ENCODE measurements at regions of chr5 and their contacts with region 1.

Region 1: GRCh38 chr5:169302491-169303118 is 1.7 kb upstream of the SLIT3 start:
- DNase-seq: peak; percentile 70 to 88 (median 84)
- ATAC-seq: peak in 1 of 2 donors; percentile 49
- H3K4me3 ChIP-seq: no peak overlapping the region
- H3K27ac ChIP-seq: no peak overlapping the region
- H3K4me1 ChIP-seq: peaks cover 8% of the 10 kb centered on the region
- H3K27me3 ChIP-seq: no peaks in the 10 kb centered on the region

Region 2: DNA sequence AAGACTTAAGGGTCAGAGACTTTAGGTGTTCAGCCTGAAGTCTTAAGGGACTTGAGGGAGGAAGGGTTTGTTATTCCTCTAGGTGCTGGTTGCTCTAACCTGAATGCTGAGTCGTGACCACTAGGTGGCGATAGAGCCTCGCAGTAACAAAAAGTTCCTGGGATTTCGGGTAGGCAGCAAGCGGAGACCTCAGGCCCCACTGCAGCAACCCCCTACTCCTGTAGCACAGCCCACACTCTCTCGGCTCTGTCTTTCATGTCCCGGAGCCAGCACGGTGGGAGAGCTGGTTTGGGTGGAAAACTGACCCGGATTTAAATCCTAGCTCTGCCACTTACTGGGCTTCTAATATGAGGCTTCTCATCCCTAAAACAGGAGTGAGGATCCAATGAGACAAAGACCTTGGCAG is 623.1 kb before region 1 on chr5:
- intact Hi-C with region 1: loop called in 1 of 4 experiments (anchors 5 kb)
- DNase-seq: peak; percentile 77 to 86 (median 80)
- ATAC-seq: peak; percentile 39 to 55
- H3K4me3 ChIP-seq: no peak overlapping the region
- H3K27ac ChIP-seq: no peak overlapping the region
- H3K4me1 ChIP-seq: peaks cover 12% of the 10 kb centered on the region
- H3K27me3 ChIP-seq: no peaks in the 10 kb centered on the region

Region 3: GRCh38 chr5:168786147-168786546 is 516.5 kb before region 1 on chr5:
- intact Hi-C with region 1: no loop called
- DNase-seq: no peak
- ATAC-seq: no peak
- H3K4me3 ChIP-seq: no peak overlapping the region
- H3K27ac ChIP-seq: no peak overlapping the region
- H3K4me1 ChIP-seq: no peaks in the 10 kb centered on the region
- H3K27me3 ChIP-seq: no peaks in the 10 kb centered on the region

Region 4: GRCh38 chr5:168987543-168988300 is 314.9 kb before region 1 on chr5:
- intact Hi-C with region 1: loop called (anchors 2 to 5 kb)
- DNase-seq: peak; percentile 70 to 90 (median 78)
- ATAC-seq: peak; percentile 29 to 53
- H3K4me3 ChIP-seq: no peak overlapping the region
- H3K27ac ChIP-seq: no peak overlapping the region
- H3K4me1 ChIP-seq: no peaks in the 10 kb centered on the region
- H3K27me3 ChIP-seq: no peaks in the 10 kb centered on the region

Region 5: DNA sequence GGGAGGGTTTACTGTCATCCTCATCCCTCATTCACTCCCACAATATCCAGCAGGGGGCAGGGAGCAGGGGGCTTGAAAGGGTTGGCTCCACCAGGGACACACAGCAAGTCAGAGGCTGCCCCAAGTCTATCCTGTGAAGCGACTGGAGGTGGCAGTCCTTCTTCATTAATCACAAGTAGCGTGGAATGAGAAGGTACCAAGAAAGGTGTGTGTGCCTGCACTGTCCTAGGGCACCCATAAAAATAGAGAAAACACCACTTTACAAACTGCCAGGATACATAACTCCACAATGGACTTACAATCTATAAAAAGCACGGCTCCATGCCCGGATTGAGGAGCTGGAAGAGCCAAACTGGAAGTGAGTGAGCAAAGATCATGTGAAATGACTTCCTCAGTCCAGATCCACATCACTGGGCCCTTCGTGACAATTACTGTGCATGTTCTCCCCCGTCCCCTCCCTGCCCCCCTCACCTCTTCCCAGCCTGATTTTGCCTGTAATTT is 185.6 kb before region 1 on chr5:
- intact Hi-C with region 1: loop called in 1 of 4 experiments (anchors 5 kb)
- DNase-seq: peak in 2 of 3 donors; percentile 21 to 41
- ATAC-seq: peak; percentile 70 to 75
- H3K4me3 ChIP-seq: no peak overlapping the region
- H3K27ac ChIP-seq: peak overlapping the region; percentile 55
- H3K4me1 ChIP-seq: peaks cover 2% of the 10 kb centered on the region
- H3K27me3 ChIP-seq: no peaks in the 10 kb centered on the region

Region 6: GRCh38 chr5:169183576-169183975 is 119.0 kb before region 1 on chr5:
- intact Hi-C with region 1: no loop called
- DNase-seq: no peak
- ATAC-seq: no peak
- H3K4me3 ChIP-seq: no peak overlapping the region
- H3K27ac ChIP-seq: no peak overlapping the region
- H3K4me1 ChIP-seq: no peaks in the 10 kb centered on the region
- H3K27me3 ChIP-seq: no peaks in the 10 kb centered on the region

Region 7: GRCh38 chr5:169248550-169248949 is 54.1 kb before region 1 on chr5:
- intact Hi-C with region 1: loop called in 1 of 4 experiments (anchors 2 kb)
- DNase-seq: peak in 1 of 3 donors; percentile 59
- ATAC-seq: peak in 1 of 2 donors; percentile 70
- H3K4me3 ChIP-seq: no peak overlapping the region
- H3K27ac ChIP-seq: no peak overlapping the region
- H3K4me1 ChIP-seq: peaks cover 2% of the 10 kb centered on the region
- H3K27me3 ChIP-seq: no peaks in the 10 kb centered on the region

Region 8: GRCh38 chr5:169350759-169351240 is 48.2 kb after region 1 on chr5:
- intact Hi-C with region 1: no loop called
- DNase-seq: peak; percentile 46 to 60 (median 59)
- ATAC-seq: peak; percentile 85 to 92
- H3K4me3 ChIP-seq: no peak overlapping the region
- H3K27ac ChIP-seq: no peak overlapping the region
- H3K4me1 ChIP-seq: peaks cover 2% of the 10 kb centered on the region
- H3K27me3 ChIP-seq: no peaks in the 10 kb centered on the region

Region 9: GRCh38 chr5:169548315-169548714 is 245.7 kb after region 1 on chr5:
- intact Hi-C with region 1: loop called in 1 of 4 experiments (anchors 10 kb)
- DNase-seq: no peak
- ATAC-seq: peak; percentile 88 to 92
- H3K4me3 ChIP-seq: no peak overlapping the region
- H3K27ac ChIP-seq: no peak overlapping the region
- H3K4me1 ChIP-seq: no peaks in the 10 kb centered on the region
- H3K27me3 ChIP-seq: no peaks in the 10 kb centered on the region

Region 10: GRCh38 chr5:169904059-169904458 is 601.5 kb after region 1 on chr5:
- intact Hi-C with region 1: no loop called
- DNase-seq: no peak
- ATAC-seq: peak in 1 of 2 donors; percentile 56
- H3K4me3 ChIP-seq: no peak overlapping the region
- H3K27ac ChIP-seq: no peak overlapping the region
- H3K4me1 ChIP-seq: peaks cover 2% of the 10 kb centered on the region
- H3K27me3 ChIP-seq: no peaks in the 10 kb centered on the region

Measured in right cardiac atrium (tissue), 5 donors.